ENCODE measurements at regions of chr17 and their contacts with region 1.

Region 1: DNA sequence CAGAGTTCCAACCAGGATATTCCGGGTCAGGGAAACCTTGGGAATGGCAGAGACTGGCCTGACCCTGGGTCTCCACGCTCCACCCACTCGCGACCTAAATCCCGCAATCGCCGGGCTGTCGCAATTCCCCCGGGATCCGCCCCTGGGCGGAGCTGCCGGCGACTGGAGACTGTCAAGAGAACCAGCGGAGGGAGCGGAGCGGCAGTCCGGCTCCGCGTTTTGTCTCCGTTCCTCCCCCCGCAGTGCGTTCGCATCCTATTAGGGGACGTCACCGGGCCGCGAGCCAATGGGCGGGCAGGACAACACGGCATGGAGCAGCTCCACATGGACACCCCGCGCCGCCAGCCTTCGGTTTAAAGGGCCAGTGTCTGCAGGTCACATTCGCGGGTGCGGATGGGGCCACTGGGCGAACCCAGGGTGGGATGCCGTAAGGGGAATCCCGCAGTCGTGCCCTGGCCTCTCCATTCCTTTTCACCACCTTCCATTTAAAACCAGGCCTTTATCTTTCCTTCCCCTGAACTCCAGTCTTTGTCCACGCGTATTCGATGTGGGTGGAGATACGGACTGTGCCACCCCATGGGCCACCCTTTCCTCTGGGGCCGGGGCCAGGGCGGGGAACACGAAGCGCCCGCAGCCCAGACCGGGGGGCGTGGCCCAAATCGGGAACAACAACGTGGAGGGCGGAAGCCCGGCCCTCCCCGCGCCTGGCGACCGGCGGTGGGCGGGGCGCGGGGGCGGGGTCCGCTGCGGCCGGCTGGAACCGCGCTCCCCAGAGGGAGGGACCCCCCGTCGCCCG is 764 bp upstream of the MNT start:
- DNase-seq: peak; percentile 100
- H3K4me3 ChIP-seq: peak overlapping the region; percentile 67 to 100 (median 96)
- H3K27ac ChIP-seq: peak overlapping the region; percentile 87 to 100 (median 97)
- H3K27me3 ChIP-seq: no peaks in the 10 kb centered on the region
- CTCF ChIP-seq: peak in 6 of 56 donors; percentile 5 to 29 (median 8)

Region 2: DNA sequence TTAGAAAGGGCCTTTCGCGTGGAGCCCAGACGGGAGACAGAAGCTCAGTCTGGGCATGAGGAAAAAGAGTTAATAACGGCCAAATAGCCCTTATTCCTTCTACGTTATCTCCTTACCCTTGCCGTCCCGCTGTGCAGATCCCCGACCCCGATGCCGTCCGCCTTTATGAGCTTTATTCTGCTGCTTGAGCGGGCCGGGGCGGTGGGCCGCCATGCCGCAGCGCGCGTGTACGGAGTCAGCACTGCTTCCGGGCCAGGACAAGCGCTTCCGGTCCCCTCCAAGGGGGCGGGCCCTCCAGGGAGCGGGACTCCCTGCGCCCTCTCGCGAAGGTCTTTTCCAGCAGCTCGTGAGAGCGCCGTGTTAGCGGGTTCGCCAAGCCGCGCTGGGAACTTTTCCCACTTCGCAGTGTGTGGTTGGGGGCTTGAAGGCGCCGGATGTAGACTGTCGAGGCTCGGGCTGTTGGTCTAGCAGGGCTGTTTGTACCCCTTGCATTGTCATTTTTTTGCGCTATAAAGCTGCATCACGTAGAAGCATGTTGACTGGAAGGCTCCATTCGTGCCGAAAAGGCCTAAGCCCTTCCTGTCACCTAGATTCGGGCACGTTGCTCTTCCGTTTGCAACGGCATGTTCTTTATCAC is 65.3 kb before region 1 on chr17 and contains the start of gene TSR1:
- intact Hi-C with region 1: loop called (anchors 5 kb)
- DNase-seq: peak; percentile 89 to 97 (median 93)
- H3K4me3 ChIP-seq: peak within 1 kb of the TSS; percentile 61 to 100 (median 88)
- H3K27ac ChIP-seq: peak within 1 kb of the TSS; percentile 36 to 95 (median 87)
- H3K27me3 ChIP-seq: no peaks in the 10 kb centered on the region
- CTCF ChIP-seq: peak in 54 of 56 donors; percentile 16 to 76 (median 60)
- total RNA-seq, gene TSR1: 16.4 to 33.3 (median 23.0) TPM

Measured in dorsolateral prefrontal cortex (tissue), 120 donors.